ENCODE measurements at regions of chr13 and their contacts with region 1.

Region 1: DNA sequence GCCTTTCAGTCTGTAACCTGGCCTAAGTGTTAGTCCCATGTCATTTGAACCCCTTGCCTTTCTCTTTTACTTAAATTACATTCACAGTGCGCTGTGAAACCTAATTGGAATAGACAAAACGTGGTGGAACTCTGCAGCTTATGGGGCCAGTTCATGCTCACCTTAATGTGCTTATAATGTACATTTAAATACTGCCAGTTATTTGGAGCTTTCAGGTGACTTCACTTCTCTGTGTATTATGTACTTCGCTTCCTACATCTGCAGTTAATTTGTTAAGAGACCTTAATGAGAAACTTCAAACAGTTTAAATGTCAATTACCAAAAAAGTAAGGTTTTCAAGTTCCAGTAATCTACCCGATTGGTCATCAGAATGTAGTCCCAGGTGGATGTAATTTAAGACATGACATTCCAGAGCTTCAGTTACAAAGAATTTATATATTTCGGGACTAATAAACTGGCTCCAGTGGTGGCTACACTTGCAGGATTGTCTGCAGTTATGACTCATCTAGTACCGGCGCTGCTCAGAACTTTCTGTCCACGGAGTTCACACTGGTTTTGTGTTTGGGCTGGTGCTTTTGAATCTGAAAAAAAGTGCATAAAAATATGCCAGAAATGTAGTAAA is 125.3 kb downstream of the TM9SF2 start:
- DNase-seq: no peak
- ATAC-seq: no peak
- H3K4me3 ChIP-seq: no peak overlapping the region
- H3K27ac ChIP-seq: no peak overlapping the region
- H3K4me1 ChIP-seq: no peaks in the 10 kb centered on the region; the same call in 1 of the 2 replicates
- H3K27me3 ChIP-seq: no peaks in the 10 kb centered on the region
- CTCF ChIP-seq: no peak

Region 2: GRCh38 chr13:100149389-100149788 is 522.8 kb after region 1 on chr13:
- CTCF ChIA-PET with region 1: no interaction called
- POLR2A ChIA-PET with region 1: no interaction called
- in situ Hi-C with region 1: no loop called
- intact Hi-C with region 1: loop called (anchors 5 kb)
- DNase-seq: no peak
- ATAC-seq: no peak
- H3K4me3 ChIP-seq: no peak overlapping the region
- H3K27ac ChIP-seq: no peak overlapping the region
- H3K4me1 ChIP-seq: no peaks in the 10 kb centered on the region
- H3K27me3 ChIP-seq: no peaks in the 10 kb centered on the region
- CTCF ChIP-seq: no peak

Measured in Panc1 (cell line).